Endothelial cell of umbilical vein (primary cell): ENCODE measurements at regions of chr18 and their contacts with region 1.

Region 1: GRCh38 chr18:76686737-76687262 is 135.6 kb upstream of the ZNF236 start:
- DNase-seq: peak; percentile 47
- H3K4me3 ChIP-seq: no peak overlapping the region
- H3K27ac ChIP-seq: no peak overlapping the region
- H3K4me1 ChIP-seq: no peaks in the 10 kb centered on the region
- H3K27me3 ChIP-seq: peaks cover 0 to 2% of the 10 kb centered on the region in 2 experiments
- CTCF ChIP-seq: peak; percentile 37 to 55
- POLR2A ChIP-seq: no peak

Region 2: GRCh38 chr18:76467371-76468190 is 219.2 kb before region 1 on chr18:
- CTCF ChIA-PET with region 1: no interaction called
- POLR2A ChIA-PET with region 1: no interaction called
- dilution Hi-C with region 1: no loop called
- intact Hi-C with region 1: no loop called
- DNase-seq: no peak
- H3K4me3 ChIP-seq: no peak overlapping the region
- H3K27ac ChIP-seq: no peak overlapping the region
- H3K4me1 ChIP-seq: no peaks in the 10 kb centered on the region
- H3K27me3 ChIP-seq: no peaks in the 10 kb centered on the region
- CTCF ChIP-seq: no peak
- POLR2A ChIP-seq: no peak

Region 3: DNA sequence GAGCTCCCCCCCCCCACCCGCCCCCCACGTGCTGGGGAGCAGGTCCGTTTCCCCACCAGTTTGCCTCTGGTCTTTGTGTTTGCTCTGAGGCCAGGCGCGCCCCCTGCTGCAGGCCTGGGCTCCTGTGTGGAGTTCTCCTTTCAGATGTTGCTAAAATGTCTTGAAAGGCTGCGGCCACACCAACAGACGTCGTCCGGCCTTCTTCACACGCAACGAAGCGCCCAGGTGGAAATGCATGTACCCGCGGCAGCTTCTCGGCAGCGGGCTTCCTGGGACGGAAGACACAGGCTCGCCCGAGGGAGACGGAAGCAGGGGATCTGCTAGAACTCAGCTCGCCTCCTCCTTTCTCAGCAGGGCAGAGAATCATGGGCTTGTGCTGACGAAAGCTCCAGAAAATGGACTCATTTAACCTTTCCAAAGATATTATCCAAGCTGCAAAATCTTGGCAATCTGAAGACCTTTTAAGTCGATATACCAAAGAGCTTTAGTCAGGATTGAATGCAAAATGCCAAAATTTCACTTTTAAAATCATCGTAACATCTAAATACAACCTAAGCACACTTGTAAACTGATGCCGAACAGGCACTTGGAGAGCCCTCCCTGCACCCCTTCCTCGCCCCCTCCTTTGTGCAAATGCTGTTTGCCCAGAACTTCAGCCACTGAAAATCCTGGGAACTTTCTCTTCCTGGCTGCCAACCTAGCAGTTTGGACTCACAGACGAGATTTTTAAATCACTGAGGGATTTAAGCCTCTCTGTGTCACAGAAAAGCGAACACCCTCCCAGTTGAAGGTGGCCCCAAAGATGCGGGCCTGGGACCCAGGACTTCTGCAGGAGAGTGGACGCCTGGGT is 66.3 kb before region 1 on chr18:
- CTCF ChIA-PET with region 1: interaction called, 3 read pairs
- POLR2A ChIA-PET with region 1: no interaction called
- dilution Hi-C with region 1: no loop called
- intact Hi-C with region 1: loop called (anchors 1 kb)
- DNase-seq: peak; percentile 24
- H3K4me3 ChIP-seq: no peak overlapping the region
- H3K27ac ChIP-seq: no peak overlapping the region
- H3K4me1 ChIP-seq: no peaks in the 10 kb centered on the region
- H3K27me3 ChIP-seq: peaks cover 7 to 15% of the 10 kb centered on the region in 2 experiments
- CTCF ChIP-seq: peak in 1 of 2 donors; percentile 67
- POLR2A ChIP-seq: no peak

Region 4: GRCh38 chr18:76741365-76741764 is 54.6 kb after region 1 on chr18:
- CTCF ChIA-PET with region 1: no interaction called
- POLR2A ChIA-PET with region 1: no interaction called
- dilution Hi-C with region 1: no loop called
- intact Hi-C with region 1: loop called (anchors 10 kb)
- DNase-seq: no peak
- H3K4me3 ChIP-seq: no peak overlapping the region
- H3K27ac ChIP-seq: no peak overlapping the region
- H3K4me1 ChIP-seq: peaks cover 4% of the 10 kb centered on the region
- H3K27me3 ChIP-seq: no peaks in the 10 kb centered on the region
- CTCF ChIP-seq: no peak
- POLR2A ChIP-seq: no peak